ENCODE measurements at regions of chr2 and their contacts with region 1.

Region 1: GRCh38 chr2:241235859-241236661 is 47.6 kb downstream of the ANO7 start:
- DNase-seq: no peak
- H3K4me3 ChIP-seq: no peak overlapping the region
- H3K27ac ChIP-seq: no peak overlapping the region
- H3K4me1 ChIP-seq: no peaks in the 10 kb centered on the region
- CTCF ChIP-seq: no peak

Region 2: DNA sequence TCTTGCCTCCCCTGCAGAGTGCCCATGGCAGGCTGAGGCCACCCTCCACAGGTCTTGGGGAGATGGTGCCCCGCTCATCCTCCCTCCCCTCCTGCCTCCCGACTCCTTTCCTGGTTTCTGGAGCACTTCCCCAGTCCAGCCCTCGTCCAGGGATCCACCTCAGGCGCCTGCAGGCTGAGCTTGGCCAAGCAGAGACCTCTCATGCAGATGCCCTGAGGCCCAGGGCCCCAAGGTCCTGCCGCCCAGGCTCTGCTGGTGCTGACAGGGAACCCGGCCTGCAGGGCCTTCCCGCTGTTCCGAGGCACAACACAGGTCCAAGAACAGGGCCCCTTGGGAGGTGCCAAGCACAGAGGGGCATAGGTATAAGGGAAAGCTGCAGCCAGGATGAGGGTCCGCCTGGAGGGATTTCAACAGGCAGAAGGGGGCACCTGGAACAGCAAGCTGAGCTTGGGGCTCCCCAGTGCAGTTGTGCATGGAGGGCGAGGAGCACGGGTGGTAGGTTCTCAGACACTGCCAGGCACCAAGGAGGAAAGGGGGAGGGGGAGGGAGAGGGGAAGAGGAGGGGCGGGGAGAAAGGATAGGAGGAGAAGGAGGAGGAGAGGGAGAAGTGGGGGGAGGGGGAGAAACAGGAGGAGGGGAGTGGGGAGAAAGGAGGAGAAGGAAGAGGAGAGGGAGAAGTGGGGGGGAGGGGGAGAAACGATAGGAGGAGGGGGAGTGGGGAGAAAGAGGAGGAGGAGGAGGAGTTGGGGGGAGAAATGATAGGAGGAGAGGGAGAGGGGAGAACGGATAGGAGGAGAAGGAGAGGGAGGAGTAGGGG is 48.8 kb before region 1 on chr2:
- CTCF ChIA-PET with region 1: interaction called, 12 read pairs
- POLR2A ChIA-PET with region 1: no interaction called
- intact Hi-C with region 1: no loop called
- DNase-seq: no peak
- H3K4me3 ChIP-seq: no peak overlapping the region
- H3K27ac ChIP-seq: no peak overlapping the region
- H3K4me1 ChIP-seq: peaks cover 13% of the 10 kb centered on the region
- CTCF ChIP-seq: no peak

Region 3: DNA sequence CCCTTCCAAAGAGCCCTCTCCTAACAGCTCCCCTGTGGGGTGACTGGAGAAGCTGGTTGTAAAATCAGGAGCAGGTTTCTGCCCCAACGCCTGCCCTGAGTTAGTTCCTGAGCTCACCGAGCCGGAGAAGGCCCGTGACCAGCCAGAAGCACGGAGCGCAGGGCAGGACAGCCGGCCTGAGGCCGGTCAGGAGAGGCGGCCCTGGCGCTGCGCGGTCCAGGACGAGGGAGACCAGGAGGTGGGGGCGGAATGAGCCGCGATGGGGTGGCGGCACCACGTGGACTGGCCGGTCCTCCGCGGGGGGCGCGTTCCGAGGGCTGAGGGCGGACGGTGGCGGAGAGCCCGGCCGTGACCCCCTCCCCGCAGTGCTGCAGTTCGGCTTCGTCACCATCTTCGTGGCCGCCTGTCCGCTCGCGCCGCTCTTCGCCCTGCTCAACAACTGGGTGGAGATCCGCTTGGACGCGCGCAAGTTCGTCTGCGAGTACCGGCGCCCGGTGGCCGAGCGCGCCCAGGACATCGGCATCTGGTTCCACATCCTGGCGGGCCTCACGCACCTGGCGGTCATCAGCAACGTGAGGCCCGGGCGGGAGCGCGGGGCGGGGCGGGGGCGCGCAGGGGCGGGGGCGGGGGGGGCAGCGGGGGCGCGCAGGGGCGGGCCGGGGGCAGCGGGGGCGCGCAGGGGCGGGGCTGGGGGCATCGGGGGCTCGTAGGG is 18.6 kb before region 1 on chr2:
- CTCF ChIA-PET with region 1: no interaction called
- POLR2A ChIA-PET with region 1: no interaction called
- intact Hi-C with region 1: no loop called
- DNase-seq: peak; percentile 66
- H3K4me3 ChIP-seq: no peak overlapping the region
- H3K27ac ChIP-seq: no peak overlapping the region
- H3K4me1 ChIP-seq: peaks cover 11% of the 10 kb centered on the region
- CTCF ChIP-seq: no peak

Measured in OCI-LY7 (cell line).